A673 (cell line): ENCODE measurements at regions of chr5 and their contacts with region 1.

Region 1: GRCh38 chr5:65742565-65743231 is 20.7 kb downstream of the NLN start:
- DNase-seq: peak; percentile 71
- H3K4me3 ChIP-seq: no peak overlapping the region
- H3K27ac ChIP-seq: no peak overlapping the region
- H3K4me1 ChIP-seq: no peaks in the 10 kb centered on the region
- H3K27me3 ChIP-seq: no peaks in the 10 kb centered on the region
- CTCF ChIP-seq: peak; percentile 67

Region 2: DNA sequence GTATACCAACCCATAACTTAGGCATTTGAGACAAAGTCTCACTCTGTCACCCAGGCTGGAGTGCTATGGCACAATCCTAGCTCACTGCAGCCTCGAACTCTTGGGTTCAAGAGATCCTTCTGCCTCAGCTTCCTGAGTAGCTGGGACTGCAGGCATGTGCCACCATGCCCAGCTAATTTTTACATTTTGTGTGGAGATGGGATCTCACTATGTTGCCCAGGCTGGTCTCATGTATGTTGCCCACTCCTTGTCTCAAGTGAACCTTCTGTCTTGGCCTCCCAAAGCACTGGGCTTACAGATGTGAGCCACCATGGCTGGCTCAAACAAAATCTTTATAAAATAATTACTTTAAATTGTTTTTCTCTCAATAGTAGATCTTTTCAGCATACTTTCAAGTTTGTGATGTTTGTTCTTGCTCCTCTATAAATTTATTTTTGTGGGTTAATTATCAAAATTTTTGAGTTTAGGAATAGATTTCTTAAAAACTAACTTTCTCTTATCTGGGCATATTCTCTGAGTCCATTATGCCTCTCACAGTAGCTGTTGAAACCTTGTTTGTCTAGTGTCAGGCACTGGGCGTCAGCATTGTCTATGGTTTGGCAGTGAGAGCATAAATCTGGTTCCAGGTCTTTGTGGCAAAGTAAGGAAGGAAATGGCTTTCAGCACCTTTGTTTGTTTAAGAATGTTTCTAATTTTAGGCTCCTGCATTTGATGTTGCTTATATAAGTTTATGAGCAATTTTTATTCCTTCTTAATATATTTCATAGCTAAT is 18.0 kb after region 1 on chr5:
- CTCF ChIA-PET with region 1: no interaction called
- POLR2A ChIA-PET with region 1: interaction called, 15 read pairs
- intact Hi-C with region 1: no loop called
- DNase-seq: no peak
- H3K4me3 ChIP-seq: no peak overlapping the region
- H3K27ac ChIP-seq: no peak overlapping the region
- H3K4me1 ChIP-seq: no peaks in the 10 kb centered on the region
- H3K27me3 ChIP-seq: no peaks in the 10 kb centered on the region
- CTCF ChIP-seq: no peak

Region 3: DNA sequence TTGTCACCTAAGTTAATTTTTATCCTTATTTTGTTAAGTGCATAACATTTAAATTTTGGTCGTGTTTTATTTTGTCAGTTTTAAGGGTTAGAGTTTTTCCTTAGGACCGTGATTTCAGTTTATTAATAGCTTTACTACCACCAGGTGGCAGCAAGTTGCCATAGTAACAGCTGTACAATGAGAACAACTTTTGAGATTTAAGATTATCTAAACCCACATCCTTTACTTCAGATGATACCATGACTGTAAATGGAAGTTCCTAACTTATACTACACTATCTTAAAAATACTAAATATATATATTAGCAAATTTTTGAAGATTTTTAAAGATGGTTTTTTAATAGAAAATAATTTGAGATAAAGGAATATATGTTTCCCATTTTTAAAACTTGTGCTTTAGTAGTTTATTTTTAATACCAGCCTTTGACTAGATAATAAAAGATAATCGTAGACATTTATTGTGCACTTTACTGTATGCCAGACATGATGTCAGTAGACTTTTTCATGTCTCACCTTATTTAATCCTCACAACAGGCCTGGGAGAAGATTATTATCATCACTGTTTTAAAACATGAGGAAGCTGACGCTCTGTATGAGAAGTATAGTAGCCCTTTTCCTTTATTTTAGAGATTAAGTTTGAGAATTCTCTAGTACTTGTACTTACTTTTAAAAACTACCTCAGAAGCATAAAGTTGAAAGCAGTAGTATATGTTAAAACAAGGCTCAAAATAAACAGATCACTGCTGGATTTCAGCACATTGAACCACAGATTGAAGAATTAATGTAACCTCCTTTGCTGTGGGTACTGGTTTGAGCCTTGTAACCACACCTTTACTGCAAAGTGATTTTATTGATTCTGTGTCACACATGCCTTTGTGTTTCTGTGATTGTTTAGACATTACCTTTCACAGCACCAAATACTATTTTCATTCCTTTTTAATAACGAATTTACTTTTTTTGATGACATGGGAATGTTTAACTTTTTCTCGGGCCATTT is 428.9 kb after region 1 on chr5:
- CTCF ChIA-PET with region 1: no interaction called
- POLR2A ChIA-PET with region 1: no interaction called
- intact Hi-C with region 1: loop called (anchors 5 kb)
- DNase-seq: peak; percentile 62
- H3K4me3 ChIP-seq: no peak overlapping the region
- H3K27ac ChIP-seq: no peak overlapping the region
- H3K4me1 ChIP-seq: no peaks in the 10 kb centered on the region
- H3K27me3 ChIP-seq: no peaks in the 10 kb centered on the region
- CTCF ChIP-seq: peak; percentile 67